Ovary (tissue), 10 donors: ENCODE measurements at regions of chr13 and their contacts with region 1.

Region 1: GRCh38 chr13:47094734-47095434 is 198.0 kb upstream of the HTR2A start:
- DNase-seq: no peak
- H3K4me3 ChIP-seq: no peak overlapping the region
- H3K27ac ChIP-seq: no peak overlapping the region
- H3K4me1 ChIP-seq: no peaks in the 10 kb centered on the region
- H3K27me3 ChIP-seq: no peaks in the 10 kb centered on the region
- CTCF ChIP-seq: no peak
- EP300 ChIP-seq: no peak
- POLR2A ChIP-seq: no peak

Region 2: GRCh38 chr13:46796515-46797474 is 298.1 kb before region 1 on chr13 and contains the start of gene ESD:
- intact Hi-C with region 1: no loop called
- DNase-seq: peak; percentile 96 to 98 (median 96)
- H3K4me3 ChIP-seq: peak within 1 kb of the TSS; percentile 49
- H3K27ac ChIP-seq: peak within 1 kb of the TSS; percentile 86 to 94
- H3K4me1 ChIP-seq: peaks cover 5% of the 10 kb centered on the region
- H3K27me3 ChIP-seq: no peaks in the 10 kb centered on the region
- CTCF ChIP-seq: no peak
- EP300 ChIP-seq: peak; percentile 11
- POLR2A ChIP-seq: peak; percentile 81
- total RNA-seq, gene ESD: 104 to 147 (median 115) TPM

Region 3: DNA sequence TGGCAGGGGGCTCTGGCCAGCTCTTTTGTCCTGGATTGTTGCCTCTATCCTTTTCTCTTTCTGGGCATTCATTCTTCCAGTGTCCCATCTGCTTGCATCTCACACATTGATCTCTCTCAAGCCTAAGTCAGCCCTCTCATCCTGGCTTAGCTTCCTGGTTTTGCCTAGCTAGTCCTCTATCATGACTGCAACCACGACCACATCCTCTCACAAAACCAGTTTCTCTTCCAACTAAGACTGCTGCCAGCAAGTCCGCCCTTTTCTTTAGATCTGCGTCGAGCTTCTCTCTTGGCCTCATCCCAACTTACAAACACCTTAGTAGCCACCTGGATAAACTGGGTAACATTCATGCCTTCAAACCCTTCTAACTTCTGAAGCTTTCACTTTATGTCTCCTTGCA is 14.1 kb after region 1 on chr13:
- intact Hi-C with region 1: no loop called
- DNase-seq: no peak
- H3K4me3 ChIP-seq: no peak overlapping the region
- H3K27ac ChIP-seq: no peak overlapping the region
- H3K4me1 ChIP-seq: no peaks in the 10 kb centered on the region
- H3K27me3 ChIP-seq: no peaks in the 10 kb centered on the region
- CTCF ChIP-seq: no peak
- EP300 ChIP-seq: no peak
- POLR2A ChIP-seq: no peak

Region 4: DNA sequence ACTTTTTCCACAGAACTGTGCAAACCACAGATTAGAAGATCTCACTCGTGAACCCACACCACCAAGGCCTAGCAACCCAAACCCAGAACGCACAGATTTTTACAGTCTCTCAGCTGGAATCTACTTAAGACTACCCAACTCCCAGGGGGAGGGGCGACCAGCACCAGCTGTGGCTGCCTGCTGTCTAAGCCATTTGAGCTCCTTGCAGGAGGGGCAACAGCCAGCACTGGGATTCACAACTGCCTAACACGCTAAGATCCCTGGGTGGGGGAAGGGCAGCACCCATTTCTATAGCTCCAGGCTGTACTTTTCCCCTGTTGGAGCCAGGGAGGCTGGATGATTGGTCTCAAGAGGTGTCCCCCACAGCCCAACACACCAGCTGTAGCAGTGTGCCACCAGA is 537.4 kb after region 1 on chr13:
- intact Hi-C with region 1: loop called in 1 of 4 experiments (anchors 5 kb)
- DNase-seq: no peak
- H3K4me3 ChIP-seq: no peak overlapping the region
- H3K27ac ChIP-seq: no peak overlapping the region
- H3K4me1 ChIP-seq: no peaks in the 10 kb centered on the region
- H3K27me3 ChIP-seq: no peaks in the 10 kb centered on the region
- CTCF ChIP-seq: no peak
- EP300 ChIP-seq: no peak
- POLR2A ChIP-seq: no peak